HepG2 (cell line): ENCODE measurements at regions of chr17 and their contacts with region 1.

Region 1: DNA sequence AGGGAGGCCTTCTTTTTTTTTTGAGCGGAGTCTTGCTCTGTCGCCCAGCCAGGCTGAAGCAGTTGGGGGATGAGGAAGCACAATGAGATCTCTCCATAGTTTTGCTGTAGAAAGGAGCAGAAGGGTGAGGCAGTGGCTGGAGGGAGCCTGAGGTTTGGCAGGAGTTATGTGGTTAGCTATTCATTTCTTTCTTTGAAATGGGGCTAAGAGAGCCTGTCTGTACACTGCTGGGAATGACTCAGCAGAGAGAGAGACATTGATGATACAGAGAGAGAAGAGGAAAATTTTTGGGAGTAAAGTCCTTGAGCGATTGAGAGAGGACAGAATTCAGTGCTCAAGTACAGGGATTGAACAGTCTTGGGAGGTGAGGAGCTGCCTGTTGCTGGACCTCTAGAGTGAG is 22.1 kb downstream of the NOS2 start:
- DNase-seq: no peak
- ATAC-seq: no peak; the same call in 2 of the 3 replicates
- H3K4me3 ChIP-seq: no peak overlapping the region
- H3K27ac ChIP-seq: no peak overlapping the region
- H3K4me1 ChIP-seq: peaks cover 11% of the 10 kb centered on the region; the same call in 1 of the 2 replicates
- H3K27me3 ChIP-seq: peaks cover 0 to 4% of the 10 kb centered on the region in 2 experiments; a peak in 2 of 5 replicates
- CTCF ChIP-seq: no peak
- EP300 ChIP-seq: no peak
- POLR2A ChIP-seq: no peak
- RAD21 ChIP-seq: no peak

Region 2: GRCh38 chr17:27721797-27722196 is 56.4 kb before region 1 on chr17:
- CTCF ChIA-PET with region 1: no interaction called
- POLR2A ChIA-PET with region 1: no interaction called
- in situ Hi-C with region 1: loop called (anchors 10 kb)
- intact Hi-C with region 1: no loop called
- DNase-seq: no peak
- ATAC-seq: no peak
- H3K4me3 ChIP-seq: no peak overlapping the region
- H3K27ac ChIP-seq: no peak overlapping the region
- H3K4me1 ChIP-seq: no peaks in the 10 kb centered on the region
- H3K27me3 ChIP-seq: no peaks in the 10 kb centered on the region; a peak in 2 of 5 replicates
- CTCF ChIP-seq: no peak
- EP300 ChIP-seq: no peak
- POLR2A ChIP-seq: no peak
- RAD21 ChIP-seq: no peak